HCT116 (cell line): ENCODE measurements at regions of chr6 and their contacts with region 1.

Region 1: DNA sequence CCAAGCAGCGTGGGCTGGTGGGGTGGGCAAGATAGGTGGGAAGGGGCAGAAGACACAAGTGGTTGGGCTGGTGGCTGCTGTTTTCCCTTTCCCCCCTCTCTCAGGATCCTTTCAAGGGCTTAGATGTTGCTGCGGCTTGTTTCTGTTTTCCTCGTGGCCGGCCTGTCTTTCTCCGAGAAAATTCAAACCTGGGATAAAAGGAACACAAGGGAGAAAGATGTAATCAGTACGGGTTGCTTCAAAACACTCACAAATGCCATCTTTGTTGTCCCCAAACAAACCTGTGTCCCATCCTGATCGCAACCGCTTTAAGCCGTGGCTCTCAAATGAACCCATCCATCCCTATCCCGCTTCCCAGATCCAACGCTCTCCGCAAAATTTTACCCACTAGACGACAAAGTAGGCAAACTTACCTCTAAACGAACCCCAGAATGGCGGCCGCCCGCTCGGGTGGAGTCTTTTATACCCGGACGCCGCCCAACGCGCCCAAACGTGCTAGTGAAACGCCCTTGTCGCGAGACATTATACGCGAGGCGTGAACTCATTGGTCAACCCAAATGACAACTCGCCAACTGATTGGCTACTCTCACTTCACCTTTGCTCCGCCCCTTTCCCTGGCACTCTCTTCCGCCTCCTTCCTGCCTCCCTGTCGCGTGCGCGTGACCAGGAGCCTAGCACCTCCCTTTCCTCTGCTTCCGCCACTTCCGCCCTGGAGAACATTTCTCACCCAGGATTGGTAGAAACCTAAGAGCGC is at the start of gene PPP1R10:
- DNase-seq: peak; percentile 100
- ATAC-seq: peak; percentile 81
- H3K4me3 ChIP-seq: peak within 1 kb of the TSS; percentile 92 to 94
- H3K27ac ChIP-seq: peak within 1 kb of the TSS; percentile 87
- H3K4me1 ChIP-seq: peaks cover 13 to 40% of the 10 kb centered on the region in 2 experiments
- H3K27me3 ChIP-seq: no peaks in the 10 kb centered on the region
- CTCF ChIP-seq: no peak
- POLR2A ChIP-seq: peak; percentile 99
- RAD21 ChIP-seq: no peak
- total RNA-seq, gene PPP1R10: 104 TPM

Region 2: DNA sequence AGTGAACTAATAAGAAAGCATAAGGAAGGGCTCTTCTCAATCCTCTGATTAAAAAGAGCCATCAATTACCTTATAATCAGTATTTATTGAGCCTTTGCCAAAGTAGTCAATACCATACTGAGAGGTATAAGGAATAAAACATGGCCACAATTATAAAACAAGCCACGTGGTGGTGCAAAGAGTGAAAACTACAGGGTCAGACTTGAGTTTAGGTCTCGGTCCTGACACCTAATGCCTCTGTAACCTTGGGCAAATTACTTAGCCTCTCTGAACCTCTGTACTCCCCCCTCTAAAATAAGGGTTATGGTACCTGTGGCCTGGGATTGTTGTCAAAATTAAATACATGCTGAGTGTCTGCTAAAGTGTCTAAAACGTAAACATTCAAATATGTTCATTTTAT is 467.8 kb before region 1 on chr6:
- CTCF ChIA-PET with region 1: no interaction called
- POLR2A ChIA-PET with region 1: no interaction called
- RAD21 ChIA-PET with region 1: no interaction called
- intact Hi-C with region 1: no loop called
- DNase-seq: no peak
- ATAC-seq: no peak
- H3K4me3 ChIP-seq: no peak overlapping the region
- H3K27ac ChIP-seq: no peak overlapping the region
- H3K4me1 ChIP-seq: peaks cover under 1 to 2% of the 10 kb centered on the region in 2 experiments
- H3K27me3 ChIP-seq: no peaks in the 10 kb centered on the region
- CTCF ChIP-seq: no peak
- POLR2A ChIP-seq: no peak
- RAD21 ChIP-seq: no peak

Region 3: DNA sequence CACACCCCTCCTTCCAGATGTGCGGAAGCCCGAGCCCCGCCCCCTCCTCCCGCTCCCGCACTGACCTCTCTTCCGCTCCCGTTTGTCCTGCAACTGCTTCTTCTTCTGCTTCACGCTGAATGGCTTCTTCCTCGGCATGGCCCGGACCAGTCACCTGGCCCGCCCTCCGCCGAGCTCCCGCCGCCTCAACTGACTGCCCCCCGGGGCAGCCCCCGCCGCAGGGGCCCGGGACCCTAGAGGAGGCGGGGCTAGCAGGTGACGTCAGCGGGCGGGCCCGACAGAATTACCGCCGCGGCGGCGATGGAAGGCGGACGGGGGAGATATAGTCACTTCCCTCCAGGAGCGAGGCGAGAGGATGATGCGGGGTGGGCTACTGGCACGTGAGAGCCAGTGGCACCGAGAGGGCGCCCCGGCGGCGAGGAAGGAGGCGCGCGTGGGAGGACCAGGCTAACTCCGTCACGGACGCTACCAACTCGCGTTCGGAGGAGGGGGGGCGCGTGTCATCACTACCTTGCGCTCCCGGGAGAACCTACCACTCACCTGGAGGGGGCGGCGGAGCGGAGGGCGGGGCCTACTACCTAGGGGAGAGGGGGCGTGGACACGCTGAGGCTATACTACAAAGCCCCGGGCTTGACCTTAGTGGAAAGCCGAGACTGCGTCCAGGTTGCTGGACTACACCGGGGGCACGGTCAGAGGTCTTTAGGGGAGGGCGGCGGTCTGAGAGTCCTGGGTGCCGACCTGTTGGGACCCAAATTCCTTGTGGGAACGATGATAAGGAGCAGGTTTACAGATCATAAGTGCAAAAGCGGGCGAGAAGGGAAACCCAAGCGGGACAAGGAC is 60.7 kb before region 1 on chr6 and contains the start of gene GNL1:
- CTCF ChIA-PET with region 1: no interaction called
- POLR2A ChIA-PET with region 1: interaction called, 10 read pairs
- RAD21 ChIA-PET with region 1: no interaction called
- intact Hi-C with region 1: no loop called
- DNase-seq: peak; percentile 95
- ATAC-seq: peak; percentile 91
- H3K4me3 ChIP-seq: peak within 1 kb of the TSS; percentile 88 to 95
- H3K27ac ChIP-seq: peak within 1 kb of the TSS; percentile 96
- H3K4me1 ChIP-seq: peaks cover 10 to 23% of the 10 kb centered on the region in 2 experiments; a peak in 3 of 4 replicates
- H3K27me3 ChIP-seq: no peaks in the 10 kb centered on the region
- CTCF ChIP-seq: no peak
- POLR2A ChIP-seq: peak; percentile 34
- RAD21 ChIP-seq: no peak
- total RNA-seq, gene GNL1: 113 TPM

Region 4: DNA sequence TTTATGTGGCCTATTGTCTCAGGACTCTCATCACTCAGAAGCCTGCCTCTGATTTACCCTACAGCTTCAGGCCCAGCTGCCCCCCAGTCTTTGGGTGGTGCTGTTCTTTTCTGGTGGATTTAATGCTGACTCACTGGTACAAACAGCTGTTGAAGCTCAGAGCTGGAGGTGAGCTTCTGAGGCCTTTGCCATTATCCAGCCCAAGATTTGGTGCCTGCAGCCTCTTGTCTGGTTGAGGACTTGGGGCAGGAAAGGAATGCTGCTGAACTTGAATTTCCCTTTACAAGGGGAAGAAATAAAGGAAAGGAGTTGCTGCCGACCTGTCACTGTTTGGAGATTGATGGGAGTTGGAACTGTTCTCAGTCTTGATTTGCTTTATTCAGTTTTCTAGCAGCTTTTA is 26.0 kb before region 1 on chr6:
- CTCF ChIA-PET with region 1: interaction called, 3 read pairs
- POLR2A ChIA-PET with region 1: interaction called, 10 read pairs
- RAD21 ChIA-PET with region 1: interaction called in 1 of 2 experiments, 4 read pairs
- intact Hi-C with region 1: no loop called
- DNase-seq: no peak
- ATAC-seq: no peak
- H3K4me3 ChIP-seq: no peak overlapping the region
- H3K27ac ChIP-seq: peak overlapping the region; percentile 41; the same call in 1 of the 2 replicates
- H3K4me1 ChIP-seq: peaks cover 0 to 4% of the 10 kb centered on the region in 2 experiments; a peak in 1 of 4 replicates
- H3K27me3 ChIP-seq: no peaks in the 10 kb centered on the region
- CTCF ChIP-seq: no peak
- POLR2A ChIP-seq: no peak
- RAD21 ChIP-seq: no peak

Region 5: DNA sequence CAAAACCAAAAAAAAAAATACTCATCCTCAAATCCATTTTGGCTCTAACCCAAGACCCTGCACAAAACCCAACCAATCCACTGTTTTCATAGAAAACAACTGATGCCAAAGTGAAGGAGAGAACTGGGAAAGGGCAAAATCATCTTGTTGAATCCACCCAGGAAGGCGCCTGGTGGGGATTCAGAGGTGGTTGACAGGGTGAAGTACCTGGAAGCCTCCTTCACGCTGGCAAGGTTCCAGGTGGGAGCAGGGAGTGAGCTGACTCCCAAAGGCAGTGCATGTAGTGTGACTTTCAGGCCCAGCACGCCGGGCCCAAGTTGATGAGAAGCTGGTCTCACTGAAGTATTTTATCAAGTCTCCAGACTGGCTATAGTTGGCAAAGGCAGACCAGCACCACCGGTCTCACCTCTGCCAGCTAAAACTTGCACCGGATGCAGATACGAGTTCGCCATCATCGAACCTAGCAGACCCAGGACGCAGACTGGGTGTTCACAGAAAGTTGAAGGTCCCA is 16.5 kb before region 1 on chr6:
- CTCF ChIA-PET with region 1: interaction called, 3 read pairs
- POLR2A ChIA-PET with region 1: interaction called, 28 read pairs
- RAD21 ChIA-PET with region 1: interaction called in 1 of 2 experiments, 4 read pairs
- intact Hi-C with region 1: no loop called
- DNase-seq: no peak
- ATAC-seq: no peak
- H3K4me3 ChIP-seq: no peak overlapping the region
- H3K27ac ChIP-seq: no peak overlapping the region
- H3K4me1 ChIP-seq: peaks cover 0 to 12% of the 10 kb centered on the region in 2 experiments; a peak in 2 of 4 replicates
- H3K27me3 ChIP-seq: no peaks in the 10 kb centered on the region
- CTCF ChIP-seq: no peak
- POLR2A ChIP-seq: no peak
- RAD21 ChIP-seq: no peak

Region 6: DNA sequence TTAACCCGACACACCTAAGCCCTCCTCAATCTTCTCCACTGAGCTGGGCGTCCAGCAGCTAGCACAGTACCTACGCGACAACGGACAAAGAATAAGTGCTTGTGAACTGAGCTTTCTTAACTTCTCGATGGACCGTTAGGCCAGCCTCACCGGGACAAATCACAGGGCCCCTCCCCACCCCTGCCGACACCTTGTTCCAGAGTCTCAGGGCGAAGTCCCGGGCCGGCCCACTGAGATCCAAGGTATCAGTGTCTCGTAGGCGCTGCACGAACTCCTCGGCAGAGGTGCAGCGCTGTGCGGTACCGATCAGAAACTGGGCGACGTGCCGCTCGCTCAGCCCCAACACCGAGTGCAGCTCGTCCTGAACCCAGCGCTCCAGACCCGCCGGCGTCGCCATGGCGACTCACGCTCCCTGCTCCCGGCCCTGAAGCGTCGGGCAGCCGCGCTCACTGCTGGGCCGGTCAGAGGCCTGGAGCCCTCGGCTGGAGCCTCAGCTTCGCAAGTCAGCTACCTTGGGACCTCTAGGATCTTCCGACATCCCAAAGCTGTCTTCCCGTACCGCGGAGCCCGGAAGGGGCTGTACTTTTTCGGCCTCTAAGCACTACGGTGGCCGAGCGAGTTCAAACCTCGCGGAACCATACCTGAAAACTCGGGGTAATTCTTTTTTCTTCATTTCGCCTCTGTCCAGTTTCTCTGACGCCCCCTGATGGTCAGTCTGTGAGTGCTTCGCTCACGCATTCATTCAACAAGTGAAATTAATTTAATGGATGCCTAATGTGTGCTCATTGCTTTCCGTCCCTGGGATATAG is 55.7 kb after region 1 on chr6 and contains the start of gene DHX16:
- CTCF ChIA-PET with region 1: interaction called, 4 read pairs
- POLR2A ChIA-PET with region 1: interaction called, 3 read pairs
- RAD21 ChIA-PET with region 1: no interaction called
- intact Hi-C with region 1: loop called (anchors 2 kb)
- DNase-seq: peak; percentile 99
- ATAC-seq: peak; percentile 85
- H3K4me3 ChIP-seq: peak within 1 kb of the TSS; percentile 98
- H3K27ac ChIP-seq: peak within 1 kb of the TSS; percentile 57
- H3K4me1 ChIP-seq: peaks cover 4 to 22% of the 10 kb centered on the region in 2 experiments; a peak in 3 of 4 replicates
- H3K27me3 ChIP-seq: no peaks in the 10 kb centered on the region
- CTCF ChIP-seq: peak; percentile 84 to 92 (median 88)
- POLR2A ChIP-seq: peak; percentile 42
- RAD21 ChIP-seq: peak; percentile 80
- total RNA-seq, gene DHX16: 46.0 TPM

Region 7: GRCh38 chr6:30717042-30717844 is 100.3 kb after region 1 on chr6 and contains the start of gene MDC1:
- CTCF ChIA-PET with region 1: no interaction called
- POLR2A ChIA-PET with region 1: interaction called, 17 read pairs
- RAD21 ChIA-PET with region 1: no interaction called
- intact Hi-C with region 1: loop called (anchors 1 kb)
- DNase-seq: peak; percentile 100
- ATAC-seq: peak; percentile 76
- H3K4me3 ChIP-seq: peak within 1 kb of the TSS; percentile 64 to 66
- H3K27ac ChIP-seq: peak within 1 kb of the TSS; percentile 89
- H3K4me1 ChIP-seq: peaks cover 9 to 43% of the 10 kb centered on the region in 2 experiments
- H3K27me3 ChIP-seq: no peaks in the 10 kb centered on the region
- CTCF ChIP-seq: peak in 1 of 3 experiments; percentile 31; a peak in 3 of 6 replicates
- POLR2A ChIP-seq: peak; percentile 76
- RAD21 ChIP-seq: no peak
- total RNA-seq, gene MDC1: 75.8 TPM